Mammary epithelial cell (primary cell): ENCODE measurements at regions of chr6 and their contacts with region 1.

Region 1: DNA sequence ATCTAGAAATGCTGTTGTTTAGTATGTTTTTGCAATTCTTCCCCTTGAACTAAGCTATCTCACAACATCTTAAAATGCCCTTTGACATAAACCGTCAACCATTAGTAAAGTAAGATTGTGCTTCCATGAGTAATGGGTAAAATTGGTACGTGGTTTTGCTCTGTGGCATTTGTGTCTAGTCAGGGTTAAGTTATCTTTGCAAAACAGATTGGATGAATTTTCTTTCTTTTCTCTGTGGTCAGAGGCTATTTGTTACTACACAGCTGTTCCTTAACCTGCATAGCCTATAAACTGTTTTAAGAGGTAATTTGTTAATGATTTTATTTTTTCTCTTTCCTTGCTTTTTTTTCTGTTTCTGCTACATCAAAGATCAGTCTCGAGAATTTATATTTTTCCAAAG is 75.4 kb downstream of the RPP40 start:
- DNase-seq: peak; percentile 37
- H3K4me3 ChIP-seq: no peak overlapping the region
- H3K27ac ChIP-seq: no peak overlapping the region
- H3K4me1 ChIP-seq: peaks cover 10% of the 10 kb centered on the region
- H3K27me3 ChIP-seq: no peaks in the 10 kb centered on the region
- CTCF ChIP-seq: no peak

Region 2: GRCh38 chr6:4870821-4871494 is 57.5 kb before region 1 on chr6:
- CTCF ChIA-PET with region 1: no interaction called
- dilution Hi-C with region 1: no loop called
- in situ Hi-C with region 1: no loop called
- intact Hi-C with region 1: no loop called
- DNase-seq: no peak
- H3K4me3 ChIP-seq: no peak overlapping the region
- H3K27ac ChIP-seq: no peak overlapping the region
- H3K4me1 ChIP-seq: peaks cover 4% of the 10 kb centered on the region
- H3K27me3 ChIP-seq: no peaks in the 10 kb centered on the region
- CTCF ChIP-seq: no peak

Region 3: GRCh38 chr6:4889701-4890100 is 38.7 kb before region 1 on chr6:
- CTCF ChIA-PET with region 1: no interaction called
- dilution Hi-C with region 1: no loop called
- in situ Hi-C with region 1: no loop called
- intact Hi-C with region 1: loop called (anchors 5 kb)
- DNase-seq: no peak
- H3K4me3 ChIP-seq: no peak overlapping the region
- H3K27ac ChIP-seq: no peak overlapping the region
- H3K4me1 ChIP-seq: no peaks in the 10 kb centered on the region
- H3K27me3 ChIP-seq: no peaks in the 10 kb centered on the region
- CTCF ChIP-seq: no peak

Region 4: GRCh38 chr6:5058254-5058653 is 129.8 kb after region 1 on chr6:
- CTCF ChIA-PET with region 1: no interaction called
- dilution Hi-C with region 1: no loop called
- in situ Hi-C with region 1: no loop called
- intact Hi-C with region 1: no loop called
- DNase-seq: no peak
- H3K4me3 ChIP-seq: no peak overlapping the region
- H3K27ac ChIP-seq: no peak overlapping the region
- H3K4me1 ChIP-seq: no peaks in the 10 kb centered on the region
- H3K27me3 ChIP-seq: no peaks in the 10 kb centered on the region
- CTCF ChIP-seq: no peak